K562 (cell line): ENCODE measurements at regions of chr1 and their contacts with region 1.

Region 1: GRCh38 chr1:214292322-214292721 is 11.4 kb downstream of the SMYD2 start:
- DNase-seq: no peak
- ATAC-seq: no peak
- H3K4me3 ChIP-seq: no peak overlapping the region
- H3K27ac ChIP-seq: no peak overlapping the region
- H3K4me1 ChIP-seq: no peaks in the 10 kb centered on the region
- H3K27me3 ChIP-seq: no peaks in the 10 kb centered on the region
- CTCF ChIP-seq: no peak
- EP300 ChIP-seq: no peak
- POLR2A ChIP-seq: no peak
- RAD21 ChIP-seq: no peak

Region 2: GRCh38 chr1:214310010-214310409 is 17.7 kb after region 1 on chr1:
- CTCF ChIA-PET with region 1: interaction called, 3 read pairs
- POLR2A ChIA-PET with region 1: interaction called, 4 read pairs
- in situ Hi-C with region 1: no loop called
- intact Hi-C with region 1: loop called (anchors 2 kb)
- DNase-seq: no peak
- ATAC-seq: no peak
- H3K4me3 ChIP-seq: no peak overlapping the region
- H3K27ac ChIP-seq: no peak overlapping the region
- H3K4me1 ChIP-seq: no peaks in the 10 kb centered on the region
- H3K27me3 ChIP-seq: no peaks in the 10 kb centered on the region
- CTCF ChIP-seq: no peak
- EP300 ChIP-seq: no peak
- POLR2A ChIP-seq: no peak
- RAD21 ChIP-seq: no peak